ENCODE measurements at regions of chr4 and their contacts with region 1.

Region 1: DNA sequence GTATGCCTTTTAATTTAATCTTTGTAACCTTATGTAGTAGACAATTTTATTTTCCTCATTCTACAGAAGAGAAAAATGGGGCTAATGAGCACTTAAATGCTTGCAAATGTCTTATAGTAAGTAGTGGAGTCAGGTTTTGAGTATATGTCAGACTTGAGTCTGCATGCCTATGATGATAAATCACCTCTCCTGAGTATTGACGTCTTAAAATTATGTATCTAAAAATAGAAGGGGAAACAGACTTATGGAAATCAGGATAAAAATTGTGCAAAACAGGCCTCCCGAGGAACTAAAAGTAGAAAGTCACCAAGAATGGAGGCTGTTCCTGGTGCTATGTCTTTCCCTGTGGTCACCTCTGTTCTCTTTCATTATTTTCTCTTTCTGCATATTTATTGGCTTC is 92.7 kb downstream of the STIM2 start:
- DNase-seq: no peak
- ATAC-seq: no peak
- H3K4me3 ChIP-seq: no peak overlapping the region
- H3K4me3 Mint-ChIP-seq: no peak overlapping the region
- H3K27ac ChIP-seq: no peak overlapping the region
- H3K27ac Mint-ChIP-seq: no peak overlapping the region
- H3K4me1 ChIP-seq: peaks cover 21% of the 10 kb centered on the region
- H3K4me1 Mint-ChIP-seq: peaks cover 53% of the 10 kb centered on the region
- H3K27me3 ChIP-seq: no peaks in the 10 kb centered on the region
- H3K27me3 Mint-ChIP-seq: no peaks in the 10 kb centered on the region
- CTCF ChIP-seq: no peak

Region 2: GRCh38 chr4:26916195-26916594 is 37.2 kb before region 1 on chr4:
- CTCF ChIA-PET with region 1: no interaction called
- POLR2A ChIA-PET with region 1: no interaction called
- intact Hi-C with region 1: loop called in 1 of 2 experiments (anchors 5 kb)
- DNase-seq: peak in 3 of 9 experiments; percentile 18 to 39 (median 19)
- ATAC-seq: no peak
- H3K4me3 ChIP-seq: no peak overlapping the region
- H3K4me3 Mint-ChIP-seq: no peak overlapping the region
- H3K27ac ChIP-seq: peak overlapping the region in 1 of 2 experiments; percentile 1
- H3K27ac Mint-ChIP-seq: peak overlapping the region; percentile 68
- H3K4me1 ChIP-seq: peaks cover 39% of the 10 kb centered on the region
- H3K4me1 Mint-ChIP-seq: peaks cover 66% of the 10 kb centered on the region
- H3K27me3 ChIP-seq: no peaks in the 10 kb centered on the region
- H3K27me3 Mint-ChIP-seq: no peaks in the 10 kb centered on the region
- CTCF ChIP-seq: no peak

Region 3: DNA sequence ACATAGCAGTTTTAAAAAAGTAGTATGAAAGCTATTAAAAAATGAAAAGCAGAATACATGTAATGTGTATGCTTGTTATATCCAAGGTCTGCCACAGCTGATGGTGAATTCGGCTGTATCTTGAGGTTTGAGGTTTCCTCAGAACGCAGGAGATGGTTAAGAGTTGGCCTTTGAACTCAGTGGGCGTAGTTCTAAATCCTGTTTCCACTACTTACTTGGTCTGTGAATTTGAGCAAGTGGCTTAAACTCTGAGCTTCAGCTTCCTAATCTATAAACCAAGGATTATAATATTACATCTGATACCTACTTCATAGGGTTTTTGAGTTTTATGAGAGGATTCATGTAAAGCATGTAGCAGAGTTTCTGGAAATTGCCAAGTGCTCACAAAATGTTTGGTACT is 32.5 kb after region 1 on chr4:
- CTCF ChIA-PET with region 1: no interaction called
- POLR2A ChIA-PET with region 1: no interaction called
- intact Hi-C with region 1: loop called in 1 of 2 experiments (anchors 5 kb)
- DNase-seq: peak in 4 of 9 experiments; percentile 34 to 77 (median 50)
- ATAC-seq: peak; percentile 80
- H3K4me3 ChIP-seq: no peak overlapping the region
- H3K4me3 Mint-ChIP-seq: no peak overlapping the region
- H3K27ac ChIP-seq: peak overlapping the region in 1 of 2 experiments; percentile 12
- H3K27ac Mint-ChIP-seq: no peak overlapping the region
- H3K4me1 ChIP-seq: peaks cover 26% of the 10 kb centered on the region
- H3K4me1 Mint-ChIP-seq: peaks cover 61% of the 10 kb centered on the region
- H3K27me3 ChIP-seq: no peaks in the 10 kb centered on the region
- H3K27me3 Mint-ChIP-seq: no peaks in the 10 kb centered on the region
- CTCF ChIP-seq: no peak